ENCODE measurements at regions of chr14 and their contacts with region 1.

Region 1: DNA sequence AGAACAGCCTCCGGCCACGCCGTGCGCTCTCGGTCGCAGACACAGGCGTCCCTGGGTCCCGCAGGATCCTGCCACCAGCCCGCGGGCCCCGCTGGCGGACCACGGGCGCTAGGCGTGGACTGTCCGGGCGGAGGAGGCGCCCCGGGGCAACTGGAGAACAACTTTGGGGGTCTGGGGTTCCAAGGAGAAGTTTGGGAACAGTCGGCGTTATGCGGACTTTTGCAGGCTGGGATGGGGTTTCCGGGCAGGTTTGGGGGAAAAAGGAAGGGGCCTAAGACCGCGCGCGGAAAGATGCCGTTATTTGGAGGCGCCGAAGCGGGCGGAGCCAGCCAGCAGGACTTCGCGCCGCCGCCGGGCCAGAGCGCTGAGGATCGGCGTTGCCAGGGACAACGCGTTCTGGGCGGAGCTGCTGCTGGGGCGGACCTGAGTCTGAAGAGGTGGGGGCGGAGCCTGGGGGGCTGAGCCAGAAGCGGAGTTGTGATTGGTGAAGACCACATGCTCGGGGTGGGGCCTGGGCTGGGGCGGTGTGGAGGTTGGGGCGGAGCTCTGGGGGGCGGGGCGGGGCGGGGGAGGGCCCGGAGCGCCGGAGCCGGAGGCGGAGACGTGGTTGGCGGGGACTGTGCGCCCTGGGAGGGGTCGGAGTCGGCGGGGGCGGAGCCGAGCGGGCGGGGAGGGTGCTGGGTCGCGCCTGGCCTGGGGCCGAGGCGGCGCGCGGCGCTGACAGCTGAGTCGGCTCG is at the start of gene CYP46A1:
- DNase-seq: peak; percentile 99
- ATAC-seq: peak; percentile 84
- H3K4me3 ChIP-seq: peak within 1 kb of the TSS; percentile 89
- H3K27ac ChIP-seq: peak within 1 kb of the TSS; percentile 29; the same call in 1 of the 2 replicates
- H3K4me1 ChIP-seq: peaks cover 4% of the 10 kb centered on the region; the same call in 1 of the 2 replicates
- H3K27me3 ChIP-seq: no peaks in the 10 kb centered on the region
- CTCF ChIP-seq: no peak
- total RNA-seq, gene CYP46A1: 0.52 and 1.2 TPM in 2 replicates

Region 2: GRCh38 chr14:99755629-99756603 is 72.1 kb after region 1 on chr14:
- CTCF ChIA-PET with region 1: no interaction called
- POLR2A ChIA-PET with region 1: interaction called, 16 read pairs
- intact Hi-C with region 1: no loop called
- DNase-seq: peak; percentile 86
- ATAC-seq: peak; percentile 52
- H3K4me3 ChIP-seq: no peak overlapping the region
- H3K27ac ChIP-seq: peak overlapping the region; percentile 74
- H3K4me1 ChIP-seq: peaks cover 71% of the 10 kb centered on the region
- H3K27me3 ChIP-seq: no peaks in the 10 kb centered on the region
- CTCF ChIP-seq: no peak

Region 3: GRCh38 chr14:99879401-99880295 is 195.9 kb after region 1 on chr14:
- CTCF ChIA-PET with region 1: interaction called, 10 read pairs
- POLR2A ChIA-PET with region 1: no interaction called
- intact Hi-C with region 1: no loop called
- DNase-seq: peak; percentile 86
- ATAC-seq: peak; percentile 93
- H3K4me3 ChIP-seq: peak overlapping the region; percentile 25; the same call in 1 of the 2 replicates
- H3K27ac ChIP-seq: peak overlapping the region; percentile 57
- H3K4me1 ChIP-seq: peaks cover 20% of the 10 kb centered on the region
- H3K27me3 ChIP-seq: no peaks in the 10 kb centered on the region
- CTCF ChIP-seq: no peak

Region 4: DNA sequence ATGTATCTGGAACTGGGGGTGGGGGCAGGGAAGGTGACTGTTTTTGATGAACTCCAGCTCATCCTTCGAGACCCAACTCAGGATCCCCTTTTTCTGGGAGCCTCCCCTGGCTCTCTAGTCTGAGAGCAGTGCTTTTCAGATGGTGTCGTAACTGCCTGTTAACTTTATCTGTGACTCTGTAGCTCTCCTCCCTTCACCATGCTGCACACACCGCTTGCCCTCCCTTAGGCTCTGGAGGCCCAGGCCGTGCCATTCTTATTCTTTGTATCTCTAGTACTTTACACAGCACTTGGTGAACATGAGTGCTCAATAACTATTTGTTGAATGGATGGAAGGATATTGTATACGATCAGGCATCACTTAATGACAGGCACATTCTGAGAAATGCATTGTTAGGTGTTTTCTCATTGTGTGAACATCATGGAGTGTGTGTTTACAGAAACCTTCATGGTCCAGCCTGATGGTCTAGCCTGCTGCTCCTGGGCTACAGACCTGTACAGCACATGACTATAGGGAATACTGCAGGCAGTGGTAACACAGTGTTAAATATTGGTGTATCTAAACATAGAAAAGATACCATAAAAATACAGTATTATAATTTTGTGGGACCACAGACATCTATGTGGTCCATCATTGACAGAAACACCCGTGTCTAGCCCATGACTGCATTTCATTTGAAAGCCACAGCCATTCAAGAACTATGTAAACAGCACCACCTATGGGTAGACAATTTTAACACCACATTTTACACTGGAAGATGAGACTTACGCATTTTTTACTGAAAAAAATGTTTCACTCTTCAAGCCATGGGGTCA is 201.3 kb after region 1 on chr14:
- CTCF ChIA-PET with region 1: interaction called, 10 read pairs
- POLR2A ChIA-PET with region 1: no interaction called
- intact Hi-C with region 1: loop called (anchors 1 kb)
- DNase-seq: peak; percentile 76
- ATAC-seq: peak; percentile 82
- H3K4me3 ChIP-seq: no peak overlapping the region
- H3K27ac ChIP-seq: no peak overlapping the region
- H3K4me1 ChIP-seq: peaks cover 5% of the 10 kb centered on the region
- H3K27me3 ChIP-seq: no peaks in the 10 kb centered on the region
- CTCF ChIP-seq: peak; percentile 90